Naive thymus-derived CD4-positive, alpha-beta T cell (primary cell): ENCODE measurements at regions of chr2 and their contacts with region 1.

Region 1: GRCh38 chr2:85302121-85302520 is 25.7 kb downstream of the TGOLN2 start:
- DNase-seq: no peak
- ATAC-seq: no peak
- H3K4me3 ChIP-seq: no peak overlapping the region
- H3K4me3 Mint-ChIP-seq: no peak overlapping the region
- H3K27ac ChIP-seq: no peak overlapping the region
- H3K27ac Mint-ChIP-seq: no peak overlapping the region
- H3K4me1 ChIP-seq: no peaks in the 10 kb centered on the region
- H3K4me1 Mint-ChIP-seq: peaks cover 7 to 22% (median 14%) of the 10 kb centered on the region in 7 donors
- H3K27me3 ChIP-seq: no peaks in the 10 kb centered on the region
- H3K27me3 Mint-ChIP-seq: peaks cover 0 to 23% (median 0%) of the 10 kb centered on the region in 5 donors

Region 2: GRCh38 chr2:84495539-84496146 is 806.5 kb before region 1 on chr2:
- CTCF ChIA-PET with region 1: interaction called, 3 read pairs
- POLR2A ChIA-PET with region 1: no interaction called
- intact Hi-C with region 1: loop called in 1 of 2 experiments (anchors 1 kb)
- DNase-seq: peak in 7 of 9 donors; percentile 61 to 81 (median 73)
- ATAC-seq: peak; percentile 96
- H3K4me3 ChIP-seq: no peak overlapping the region
- H3K4me3 Mint-ChIP-seq: peak overlapping the region in 1 of 10 donors; percentile 23
- H3K27ac ChIP-seq: no peak overlapping the region
- H3K27ac Mint-ChIP-seq: peak overlapping the region in 7 of 9 donors; percentile 35 to 82 (median 76)
- H3K4me1 ChIP-seq: peaks cover 0 to 5% of the 10 kb centered on the region in 2 donors
- H3K4me1 Mint-ChIP-seq: peaks cover 9 to 31% (median 28%) of the 10 kb centered on the region in 7 donors
- H3K27me3 ChIP-seq: no peaks in the 10 kb centered on the region
- H3K27me3 Mint-ChIP-seq: peaks cover 0 to 14% (median 0%) of the 10 kb centered on the region in 5 donors

Region 3: DNA sequence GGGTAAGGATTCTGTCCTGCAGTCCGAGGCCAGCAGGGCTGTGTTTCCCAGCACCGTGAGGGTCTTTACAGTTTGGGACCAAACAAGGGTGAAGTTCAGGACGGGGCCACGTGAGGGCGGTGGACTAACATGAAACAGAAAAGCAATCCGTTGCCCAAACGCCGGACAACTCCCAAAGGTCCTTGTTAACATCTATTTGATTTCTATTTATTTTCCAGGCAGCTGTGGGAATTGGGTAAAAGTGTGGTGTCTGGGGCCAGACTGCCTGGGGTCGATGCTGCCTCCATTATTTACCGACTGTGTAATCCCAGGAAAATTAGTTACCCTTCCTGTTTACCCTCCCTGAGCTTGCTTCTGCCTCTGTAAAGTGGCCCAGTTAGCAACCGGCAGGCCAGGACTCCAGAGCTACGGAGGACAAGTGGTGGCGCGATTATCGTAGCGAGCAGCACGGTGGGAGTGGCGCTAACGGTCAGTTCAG is 235.2 kb before region 1 on chr2:
- CTCF ChIA-PET with region 1: no interaction called
- POLR2A ChIA-PET with region 1: no interaction called
- intact Hi-C with region 1: loop called (anchors 2 to 5 kb)
- DNase-seq: peak in 2 of 9 donors; percentile 10 to 33
- ATAC-seq: peak; percentile 59
- H3K4me3 ChIP-seq: no peak overlapping the region
- H3K4me3 Mint-ChIP-seq: peak overlapping the region in 2 of 10 donors; percentile 35
- H3K27ac ChIP-seq: no peak overlapping the region
- H3K27ac Mint-ChIP-seq: no peak overlapping the region
- H3K4me1 ChIP-seq: no peaks in the 10 kb centered on the region
- H3K4me1 Mint-ChIP-seq: peaks cover 0 to 8% (median 4%) of the 10 kb centered on the region in 7 donors
- H3K27me3 ChIP-seq: no peaks in the 10 kb centered on the region
- H3K27me3 Mint-ChIP-seq: peaks cover 9 to 38% (median 12%) of the 10 kb centered on the region in 5 donors

Region 4: DNA sequence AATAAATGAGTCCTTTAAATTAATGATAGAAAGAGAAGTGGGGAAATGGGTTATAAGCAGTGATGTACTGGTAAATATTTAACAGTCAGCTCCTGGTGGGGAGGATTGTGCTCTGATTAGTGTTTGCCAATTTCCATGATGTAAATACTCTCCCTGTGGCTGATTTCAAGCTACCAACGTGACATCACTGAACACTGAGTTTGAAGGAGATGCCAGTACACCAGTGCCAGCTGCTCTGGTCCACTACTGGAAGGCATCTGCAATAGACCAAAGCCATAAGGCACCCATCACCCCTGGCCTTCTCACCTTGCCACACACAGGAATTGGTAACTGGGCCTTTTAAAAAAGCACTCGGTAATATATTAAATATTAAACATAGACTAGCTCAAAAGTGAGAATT is 52.1 kb before region 1 on chr2:
- CTCF ChIA-PET with region 1: no interaction called
- POLR2A ChIA-PET with region 1: no interaction called
- intact Hi-C with region 1: no loop called
- DNase-seq: no peak
- ATAC-seq: no peak
- H3K4me3 ChIP-seq: no peak overlapping the region
- H3K4me3 Mint-ChIP-seq: no peak overlapping the region
- H3K27ac ChIP-seq: no peak overlapping the region
- H3K27ac Mint-ChIP-seq: peak overlapping the region in 1 of 9 donors; percentile 18
- H3K4me1 ChIP-seq: no peaks in the 10 kb centered on the region
- H3K4me1 Mint-ChIP-seq: no peaks in the 10 kb centered on the region
- H3K27me3 ChIP-seq: no peaks in the 10 kb centered on the region
- H3K27me3 Mint-ChIP-seq: peaks cover 0 to 9% (median 0%) of the 10 kb centered on the region in 5 donors

Region 5: GRCh38 chr2:85266146-85267041 is 35.7 kb before region 1 on chr2:
- CTCF ChIA-PET with region 1: interaction called, 44 read pairs
- POLR2A ChIA-PET with region 1: no interaction called
- intact Hi-C with region 1: loop called (anchors 1 kb)
- DNase-seq: peak; percentile 27 to 76 (median 48)
- ATAC-seq: peak; percentile 78
- H3K4me3 ChIP-seq: no peak overlapping the region
- H3K4me3 Mint-ChIP-seq: no peak overlapping the region
- H3K27ac ChIP-seq: no peak overlapping the region
- H3K27ac Mint-ChIP-seq: peak overlapping the region in 1 of 9 donors; percentile 21
- H3K4me1 ChIP-seq: no peaks in the 10 kb centered on the region
- H3K4me1 Mint-ChIP-seq: peaks cover 0 to 2% (median 0%) of the 10 kb centered on the region in 7 donors
- H3K27me3 ChIP-seq: no peaks in the 10 kb centered on the region
- H3K27me3 Mint-ChIP-seq: peaks cover 0 to 26% (median 0%) of the 10 kb centered on the region in 5 donors

Region 6: DNA sequence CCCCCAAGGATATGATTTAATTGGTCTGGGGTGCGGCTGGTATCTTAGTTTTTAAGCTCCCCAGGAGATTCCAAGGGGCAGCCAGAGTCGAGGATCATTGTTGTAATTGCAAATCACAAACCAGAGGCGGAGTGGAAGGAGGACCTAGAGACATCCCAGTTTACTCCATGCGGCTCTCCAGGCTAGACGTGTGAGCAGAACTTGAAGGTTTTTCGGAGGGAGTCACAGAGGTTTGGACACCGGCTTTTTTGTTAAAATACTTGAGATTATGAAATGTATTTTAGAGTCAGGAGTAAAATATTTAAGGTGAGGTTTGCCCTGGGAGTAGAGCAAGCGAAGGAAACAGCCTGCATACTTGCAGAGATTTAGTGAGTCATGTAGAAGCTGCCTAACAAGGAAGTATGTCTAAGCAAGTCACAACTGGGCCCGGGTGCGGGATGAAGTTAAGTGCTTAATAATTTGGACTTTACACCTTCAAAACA is 13.8 kb before region 1 on chr2:
- CTCF ChIA-PET with region 1: interaction called, 6 read pairs
- POLR2A ChIA-PET with region 1: interaction called, 3 read pairs
- intact Hi-C with region 1: loop called in 1 of 2 experiments (anchors 1 kb)
- DNase-seq: no peak
- ATAC-seq: no peak
- H3K4me3 ChIP-seq: no peak overlapping the region
- H3K4me3 Mint-ChIP-seq: no peak overlapping the region
- H3K27ac ChIP-seq: no peak overlapping the region
- H3K27ac Mint-ChIP-seq: no peak overlapping the region
- H3K4me1 ChIP-seq: peaks cover 5 to 9% of the 10 kb centered on the region in 2 donors
- H3K4me1 Mint-ChIP-seq: peaks cover 14 to 31% (median 25%) of the 10 kb centered on the region in 7 donors
- H3K27me3 ChIP-seq: no peaks in the 10 kb centered on the region
- H3K27me3 Mint-ChIP-seq: no peaks in the 10 kb centered on the region

Region 7: DNA sequence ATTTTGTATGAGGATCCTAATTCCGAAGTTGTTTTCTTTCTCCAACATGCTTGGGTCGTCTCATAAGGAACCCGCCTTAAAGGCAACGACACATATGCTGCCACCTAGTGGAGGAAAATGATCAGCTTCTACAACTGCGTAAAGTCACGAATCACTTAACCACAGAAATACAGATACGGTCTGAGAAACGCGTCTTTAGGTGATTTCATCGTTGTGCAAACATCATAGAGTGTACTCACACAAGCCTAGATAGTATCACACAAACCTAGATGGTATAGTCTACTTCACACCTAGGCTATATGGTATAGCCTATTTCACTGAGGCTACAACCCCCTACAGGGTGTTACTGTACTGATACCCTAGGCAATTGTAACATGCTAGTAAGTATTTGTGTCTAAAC is 405.2 kb after region 1 on chr2:
- CTCF ChIA-PET with region 1: no interaction called
- POLR2A ChIA-PET with region 1: no interaction called
- intact Hi-C with region 1: no loop called
- DNase-seq: peak in 8 of 9 donors; percentile 38 to 75 (median 66)
- ATAC-seq: peak; percentile 85
- H3K4me3 ChIP-seq: no peak overlapping the region
- H3K4me3 Mint-ChIP-seq: peak overlapping the region in 1 of 10 donors; percentile 6
- H3K27ac ChIP-seq: no peak overlapping the region
- H3K27ac Mint-ChIP-seq: peak overlapping the region in 1 of 9 donors; percentile 90
- H3K4me1 ChIP-seq: peaks cover 0 to 25% of the 10 kb centered on the region in 2 donors
- H3K4me1 Mint-ChIP-seq: peaks cover 0 to 74% (median 5%) of the 10 kb centered on the region in 7 donors
- H3K27me3 ChIP-seq: peaks cover 0 to 4% of the 10 kb centered on the region in 2 donors
- H3K27me3 Mint-ChIP-seq: peaks cover 0 to 7% (median 4%) of the 10 kb centered on the region in 5 donors